MCF 10A (cell line): ENCODE measurements at regions of chr9 and their contacts with region 1.

Region 1: GRCh38 chr9:106964822-106965525 is 102.0 kb downstream of the ZNF462 start:
- DNase-seq: peak; percentile 62
- H3K4me3 Mint-ChIP-seq: peak overlapping the region; percentile 4
- H3K27ac Mint-ChIP-seq: peak overlapping the region; percentile 25
- H3K4me1 Mint-ChIP-seq: peaks cover 26% of the 10 kb centered on the region
- H3K27me3 Mint-ChIP-seq: no peaks in the 10 kb centered on the region
- CTCF ChIP-seq: no peak

Region 2: DNA sequence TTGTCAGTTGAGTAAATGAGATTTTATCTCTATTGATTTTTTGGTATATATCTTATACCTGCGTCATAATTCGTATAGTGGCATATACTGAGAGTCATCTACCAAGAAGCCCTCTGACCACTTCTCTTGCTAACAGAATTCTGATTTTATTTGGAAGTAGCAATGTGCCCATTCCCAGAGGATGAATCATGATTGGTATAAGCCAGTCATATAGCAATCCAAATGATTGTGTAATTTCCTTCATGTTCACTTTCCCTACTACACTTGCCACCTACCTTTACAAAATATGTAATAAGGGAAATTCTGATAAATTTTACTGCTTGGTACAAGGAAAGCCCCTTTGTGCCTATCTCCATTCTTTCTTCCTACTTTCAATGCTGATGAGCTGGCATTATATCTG is 118.1 kb before region 1 on chr9:
- CTCF ChIA-PET with region 1: no interaction called
- POLR2A ChIA-PET with region 1: no interaction called
- intact Hi-C with region 1: no loop called
- DNase-seq: peak; percentile 80
- H3K4me3 Mint-ChIP-seq: no peak overlapping the region
- H3K27ac Mint-ChIP-seq: no peak overlapping the region
- H3K4me1 Mint-ChIP-seq: peaks cover 6% of the 10 kb centered on the region
- H3K27me3 Mint-ChIP-seq: no peaks in the 10 kb centered on the region
- CTCF ChIP-seq: no peak

Region 3: GRCh38 chr9:106885451-106885850 is 79.5 kb before region 1 on chr9:
- CTCF ChIA-PET with region 1: interaction called, 3 read pairs
- POLR2A ChIA-PET with region 1: interaction called, 11 read pairs
- intact Hi-C with region 1: no loop called
- DNase-seq: peak; percentile 88
- H3K4me3 Mint-ChIP-seq: peak overlapping the region; percentile 40
- H3K27ac Mint-ChIP-seq: peak overlapping the region; percentile 86
- H3K4me1 Mint-ChIP-seq: peaks cover 68% of the 10 kb centered on the region
- H3K27me3 Mint-ChIP-seq: no peaks in the 10 kb centered on the region
- CTCF ChIP-seq: no peak

Region 4: GRCh38 chr9:106906136-106906535 is 58.8 kb before region 1 on chr9:
- CTCF ChIA-PET with region 1: no interaction called
- POLR2A ChIA-PET with region 1: no interaction called
- intact Hi-C with region 1: no loop called
- DNase-seq: no peak
- H3K4me3 Mint-ChIP-seq: no peak overlapping the region
- H3K27ac Mint-ChIP-seq: peak overlapping the region; percentile 64
- H3K4me1 Mint-ChIP-seq: no peaks in the 10 kb centered on the region
- H3K27me3 Mint-ChIP-seq: no peaks in the 10 kb centered on the region
- CTCF ChIP-seq: no peak

Region 5: DNA sequence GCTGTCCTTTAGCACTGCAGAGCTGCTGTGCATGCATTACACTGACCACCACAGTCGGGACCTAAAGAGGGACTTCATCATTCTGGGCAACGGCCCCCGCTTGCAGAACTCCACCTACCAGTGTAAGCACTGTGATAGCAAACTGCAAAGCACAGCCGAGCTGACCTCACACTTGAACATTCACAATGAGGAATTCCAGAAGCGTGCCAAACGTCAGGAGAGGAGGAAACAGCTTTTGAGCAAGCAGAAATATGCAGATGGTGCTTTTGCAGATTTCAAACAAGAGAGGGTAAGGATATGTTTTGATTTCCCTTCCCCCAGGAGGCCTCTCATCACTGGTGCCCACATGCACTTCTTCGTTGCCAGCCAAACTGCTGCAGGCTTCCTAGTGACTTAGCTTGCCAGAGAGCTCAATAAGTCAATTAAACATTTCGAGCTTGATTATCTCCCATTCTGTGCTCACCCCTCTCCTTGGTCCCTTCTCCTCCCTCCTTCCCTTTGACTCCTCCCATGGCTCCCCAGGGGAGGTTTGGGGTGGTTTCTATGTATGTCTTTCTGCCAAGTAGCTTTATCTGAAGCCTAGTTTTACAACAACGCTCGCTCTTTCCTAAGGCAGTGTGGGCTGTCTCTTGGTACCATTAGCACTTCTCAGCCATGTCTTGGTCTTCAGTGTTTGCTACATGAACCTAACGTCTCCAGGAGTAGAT is 35.4 kb before region 1 on chr9:
- CTCF ChIA-PET with region 1: no interaction called
- POLR2A ChIA-PET with region 1: no interaction called
- intact Hi-C with region 1: no loop called
- DNase-seq: no peak
- H3K4me3 Mint-ChIP-seq: no peak overlapping the region
- H3K27ac Mint-ChIP-seq: peak overlapping the region; percentile 17
- H3K4me1 Mint-ChIP-seq: no peaks in the 10 kb centered on the region
- H3K27me3 Mint-ChIP-seq: no peaks in the 10 kb centered on the region
- CTCF ChIP-seq: no peak

Region 6: DNA sequence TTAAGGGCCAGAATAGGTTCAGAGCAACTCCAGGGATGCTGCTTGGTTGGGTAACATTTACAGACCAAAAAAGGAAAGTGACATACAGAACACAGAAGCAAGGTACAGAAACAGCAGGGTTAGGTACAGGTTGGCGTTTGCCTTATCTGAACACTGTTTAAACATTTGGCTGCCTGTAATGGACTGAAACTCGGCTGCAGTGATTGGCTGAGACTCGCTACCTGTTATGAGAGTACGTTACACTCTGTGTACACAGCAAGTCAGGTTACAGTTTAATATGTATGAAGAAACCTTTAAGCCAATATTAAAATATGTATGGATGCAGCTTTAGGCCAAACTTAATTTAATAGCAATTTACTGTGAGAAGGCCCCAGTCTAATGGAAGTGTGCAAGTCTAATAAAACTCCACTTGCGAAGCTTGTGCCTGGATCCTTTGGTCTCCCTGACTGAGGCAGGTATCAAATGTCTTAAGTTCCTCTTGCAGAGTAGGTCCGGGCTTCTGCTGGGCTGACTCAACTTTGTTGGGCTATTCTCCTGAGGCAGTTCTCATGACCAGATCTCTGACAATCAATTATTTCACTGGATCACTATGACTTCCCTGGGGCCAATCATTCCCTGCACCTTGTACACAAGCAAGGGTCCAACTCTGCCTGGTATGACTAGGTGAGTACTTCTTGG is 102.9 kb after region 1 on chr9:
- CTCF ChIA-PET with region 1: no interaction called
- POLR2A ChIA-PET with region 1: no interaction called
- intact Hi-C with region 1: no loop called
- DNase-seq: no peak
- H3K4me3 Mint-ChIP-seq: no peak overlapping the region
- H3K27ac Mint-ChIP-seq: no peak overlapping the region
- H3K4me1 Mint-ChIP-seq: no peaks in the 10 kb centered on the region
- H3K27me3 Mint-ChIP-seq: no peaks in the 10 kb centered on the region
- CTCF ChIP-seq: no peak